Esophagus muscularis mucosa (tissue), 4 donors: ENCODE measurements at regions of chr15 and their contacts with region 1.

Region 1: DNA sequence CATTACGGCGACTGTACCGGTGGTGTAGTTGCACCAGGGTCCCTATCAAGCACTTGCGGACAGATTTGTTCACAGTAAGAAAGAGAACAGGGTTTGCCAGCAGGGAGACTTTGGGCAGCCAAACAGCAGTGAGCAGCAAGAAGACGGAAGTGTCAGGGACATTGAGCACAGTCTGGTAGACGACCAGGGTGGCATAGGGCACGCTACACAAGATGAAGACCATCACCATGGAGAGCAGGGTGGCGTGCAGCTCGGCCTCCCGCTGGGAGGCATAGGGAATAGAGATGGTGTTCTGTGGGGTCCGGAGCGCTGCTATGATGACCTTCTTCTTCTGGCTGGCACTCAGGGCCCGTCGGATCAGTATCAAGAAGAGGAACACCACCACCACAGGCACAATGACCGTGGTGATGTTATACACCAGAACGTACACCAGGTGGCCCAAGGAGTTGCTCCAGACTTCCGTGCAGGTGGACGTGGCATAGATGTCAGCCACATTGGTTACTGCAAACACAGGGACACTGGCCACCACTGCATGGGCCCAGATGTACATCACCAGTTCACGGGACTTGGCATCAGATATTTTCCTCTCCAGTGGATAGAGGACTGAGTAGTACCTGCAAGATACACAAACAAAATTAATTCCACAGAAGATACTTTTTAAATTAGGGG is 19.1 kb upstream of the FSIP1 start:
- DNase-seq: no peak
- H3K4me3 ChIP-seq: no peak overlapping the region
- H3K27ac ChIP-seq: no peak overlapping the region
- H3K4me1 ChIP-seq: no peaks in the 10 kb centered on the region
- H3K27me3 ChIP-seq: no peaks in the 10 kb centered on the region
- CTCF ChIP-seq: peak in 2 of 3 experiments; percentile 19 to 26
- EP300 ChIP-seq: no peak
- POLR2A ChIP-seq: no peak

Region 2: DNA sequence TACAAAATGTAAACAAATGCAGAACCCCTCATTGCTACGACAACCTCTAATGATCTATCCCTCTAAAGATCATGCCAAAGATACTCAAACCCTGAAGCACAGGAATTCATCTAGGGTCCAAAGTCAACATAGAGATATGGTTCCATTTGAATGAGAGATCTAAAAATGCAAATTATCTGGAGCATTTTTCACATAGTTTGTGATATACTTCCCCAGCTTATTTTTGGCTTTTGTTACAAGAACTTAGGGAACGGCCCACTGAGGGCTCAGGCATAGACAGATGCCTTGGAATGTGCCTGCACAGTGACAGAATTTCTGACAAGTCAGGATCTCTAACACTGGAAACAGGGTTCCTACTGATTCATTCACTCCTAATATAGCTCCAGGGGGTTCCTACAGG is 479.8 kb before region 1 on chr15:
- intact Hi-C with region 1: no loop called
- DNase-seq: no peak
- H3K4me3 ChIP-seq: no peak overlapping the region
- H3K27ac ChIP-seq: no peak overlapping the region
- H3K4me1 ChIP-seq: peaks cover 0 to 22% (median 17%) of the 10 kb centered on the region in 4 donors
- H3K27me3 ChIP-seq: no peaks in the 10 kb centered on the region
- CTCF ChIP-seq: no peak
- EP300 ChIP-seq: no peak
- POLR2A ChIP-seq: no peak

Region 3: DNA sequence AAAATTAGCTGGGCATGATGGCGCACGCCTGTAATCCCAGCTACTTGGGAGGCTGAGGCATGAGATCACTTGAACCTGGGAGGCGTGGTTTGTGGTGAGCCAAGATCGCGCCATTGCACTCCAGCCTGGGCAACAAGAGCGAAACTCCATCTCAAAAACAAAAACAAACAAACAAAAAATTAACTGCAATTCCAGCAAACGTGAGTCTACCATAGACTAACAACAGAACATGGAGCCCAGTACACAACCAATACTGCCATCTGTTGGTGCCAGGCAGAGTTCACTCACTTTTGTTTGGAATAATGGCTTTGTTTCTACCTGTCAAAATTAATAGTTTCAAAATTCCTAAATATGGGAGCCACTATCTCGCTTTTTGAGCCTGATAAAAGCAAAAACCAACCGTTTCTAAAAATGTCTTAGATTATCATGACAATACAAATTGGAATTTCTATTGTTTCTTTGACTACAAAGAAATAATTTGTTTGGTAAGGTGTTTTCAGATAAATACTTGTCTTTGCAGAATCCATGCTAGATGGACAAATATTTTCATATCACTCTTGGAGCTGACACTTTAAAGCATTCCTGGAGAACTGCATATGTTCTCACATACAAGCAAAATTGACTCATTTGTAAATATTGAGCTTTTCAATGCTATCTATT is 73.2 kb after region 1 on chr15:
- intact Hi-C with region 1: loop called (anchors 5 kb)
- DNase-seq: no peak
- H3K4me3 ChIP-seq: no peak overlapping the region
- H3K27ac ChIP-seq: no peak overlapping the region
- H3K4me1 ChIP-seq: no peaks in the 10 kb centered on the region
- H3K27me3 ChIP-seq: no peaks in the 10 kb centered on the region
- CTCF ChIP-seq: peak; percentile 54 to 72 (median 63)
- EP300 ChIP-seq: no peak
- POLR2A ChIP-seq: no peak